HCT116 (cell line): ENCODE measurements at regions of chr12 and their contacts with region 1.

Region 1: DNA sequence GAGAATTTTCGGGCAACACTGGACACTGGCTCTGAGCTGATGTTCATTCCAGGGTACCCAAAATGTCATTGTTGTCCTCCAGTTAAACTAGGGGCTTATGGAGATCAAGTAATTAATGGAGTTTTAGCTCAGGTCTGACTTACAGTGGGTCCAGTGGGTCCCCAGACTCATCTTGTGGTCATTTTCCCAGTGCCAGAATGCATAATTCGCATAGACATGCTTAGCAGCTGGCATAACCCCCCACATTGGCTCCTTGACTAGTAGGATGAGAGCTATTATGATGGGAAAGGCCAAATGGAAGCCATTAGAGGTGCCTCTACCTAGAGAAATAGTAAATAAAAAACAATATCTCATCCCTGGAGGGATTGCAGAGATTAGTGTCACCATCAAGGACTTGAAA is 818.9 kb downstream of the TMTC2 start:
- DNase-seq: no peak
- ATAC-seq: no peak
- H3K4me3 ChIP-seq: no peak overlapping the region
- H3K27ac ChIP-seq: no peak overlapping the region
- H3K4me1 ChIP-seq: no peaks in the 10 kb centered on the region
- H3K27me3 ChIP-seq: no peaks in the 10 kb centered on the region
- CTCF ChIP-seq: no peak
- POLR2A ChIP-seq: no peak
- RAD21 ChIP-seq: no peak

Region 2: DNA sequence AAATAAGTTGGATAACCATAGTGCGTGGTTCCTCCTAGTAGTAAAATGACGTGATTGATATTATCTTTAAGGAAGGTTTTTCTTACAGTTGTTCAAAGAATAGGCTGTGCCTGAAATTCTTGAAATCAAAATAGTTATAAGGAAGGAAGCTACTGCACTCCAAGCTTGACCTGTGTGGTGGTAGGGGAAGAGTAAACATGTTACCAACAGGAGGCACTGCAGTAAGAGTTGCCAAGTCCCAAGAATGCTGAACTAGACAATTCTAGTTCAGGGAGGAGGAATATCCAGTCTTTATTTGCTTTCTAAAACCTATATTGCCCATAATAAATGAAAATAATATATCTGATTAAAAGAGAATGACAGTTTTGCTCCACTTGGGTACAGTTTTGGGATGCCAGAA is 54.4 kb before region 1 on chr12:
- CTCF ChIA-PET with region 1: no interaction called
- POLR2A ChIA-PET with region 1: no interaction called
- RAD21 ChIA-PET with region 1: no interaction called
- intact Hi-C with region 1: loop called (anchors 1 kb)
- DNase-seq: no peak
- ATAC-seq: no peak
- H3K4me3 ChIP-seq: no peak overlapping the region
- H3K27ac ChIP-seq: no peak overlapping the region
- H3K4me1 ChIP-seq: no peaks in the 10 kb centered on the region
- H3K27me3 ChIP-seq: no peaks in the 10 kb centered on the region
- CTCF ChIP-seq: peak in 1 of 3 experiments; percentile 15; a peak in 1 of 6 replicates
- POLR2A ChIP-seq: no peak
- RAD21 ChIP-seq: no peak